ENCODE measurements at regions of chr21 and their contacts with region 1.

Region 1: DNA sequence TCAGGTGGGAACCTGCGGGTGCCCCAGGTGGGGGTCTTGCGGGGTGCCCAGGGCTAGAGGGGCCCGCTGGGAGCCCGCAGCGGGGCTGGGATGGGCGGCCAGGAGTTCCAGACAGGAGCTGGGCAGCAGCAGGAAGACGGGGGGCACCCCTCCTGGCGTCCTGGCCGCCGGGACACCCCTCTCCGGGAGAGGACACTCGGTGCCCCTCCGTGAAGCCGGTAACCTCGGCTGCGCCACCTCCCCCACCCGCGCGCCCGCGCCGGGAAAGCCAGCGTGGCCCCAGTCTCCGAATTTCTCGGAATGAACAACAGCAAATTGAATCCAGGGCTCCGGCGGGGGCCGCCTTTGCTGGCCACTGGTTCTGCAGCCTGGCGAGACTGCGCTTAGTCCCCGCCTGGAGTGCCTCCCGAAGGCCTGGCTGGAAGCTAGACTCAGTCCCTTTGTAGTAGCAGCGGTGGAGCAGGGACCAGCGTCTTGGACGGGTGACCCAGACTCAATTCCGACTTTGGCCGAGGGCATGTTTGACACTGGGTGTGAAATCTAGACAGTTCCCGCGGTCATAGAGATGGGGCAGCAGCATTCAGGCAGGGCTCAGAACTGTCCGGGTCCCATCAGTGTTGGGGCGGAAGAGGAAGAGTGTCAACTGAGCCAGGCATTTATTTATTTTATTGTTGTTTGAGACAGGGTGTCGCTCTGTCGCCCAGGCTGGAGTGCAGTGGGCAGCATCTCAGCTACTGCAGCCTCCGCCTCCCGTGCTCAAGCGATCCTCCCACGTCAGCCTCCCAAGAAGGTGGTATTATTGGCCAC is 769 bp downstream of the IFNGR2 start:
- DNase-seq: peak; percentile 55
- ATAC-seq: peak; percentile 36
- H3K4me3 Mint-ChIP-seq: peak overlapping the region; percentile 86
- H3K27ac Mint-ChIP-seq: peak overlapping the region; percentile 89
- H3K4me1 Mint-ChIP-seq: peaks cover 40% of the 10 kb centered on the region
- H3K27me3 Mint-ChIP-seq: peaks cover 7% of the 10 kb centered on the region

Region 2: DNA sequence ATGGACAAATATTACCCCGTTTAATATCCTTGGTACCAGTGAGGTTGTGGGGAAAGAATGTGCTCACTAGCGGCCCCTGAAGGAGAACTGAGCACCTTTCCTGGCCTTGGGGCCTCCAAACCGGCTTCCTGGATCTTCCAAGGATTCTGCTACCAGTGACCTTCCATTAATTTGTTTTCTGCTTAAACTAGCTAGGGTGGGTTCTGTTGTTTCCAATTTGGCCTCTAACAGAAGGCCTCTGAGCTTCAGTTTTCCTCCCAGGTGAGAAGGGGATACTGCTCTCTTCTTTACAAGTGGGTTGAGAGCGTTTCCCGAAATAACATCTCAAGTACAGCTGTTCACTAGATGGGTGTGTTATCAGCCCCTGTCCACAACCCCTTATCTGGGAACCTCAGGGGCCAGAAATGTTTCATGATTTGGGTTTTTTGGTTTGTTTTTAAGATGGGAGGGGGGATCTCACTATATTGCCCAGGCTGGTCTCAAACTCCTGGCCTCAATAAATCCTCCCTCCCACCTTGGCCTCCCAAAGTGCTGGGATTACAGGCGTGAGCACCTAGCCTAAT is 17.7 kb before region 1 on chr21:
- CTCF ChIA-PET with region 1: interaction called, 12 read pairs
- POLR2A ChIA-PET with region 1: no interaction called
- intact Hi-C with region 1: loop called (anchors 1 kb)
- DNase-seq: no peak
- ATAC-seq: no peak
- H3K4me3 Mint-ChIP-seq: no peak overlapping the region
- H3K27ac Mint-ChIP-seq: no peak overlapping the region
- H3K4me1 Mint-ChIP-seq: peaks cover 42% of the 10 kb centered on the region
- H3K27me3 Mint-ChIP-seq: peaks cover 7% of the 10 kb centered on the region

Region 3: GRCh38 chr21:33421720-33422393 is 17.9 kb after region 1 on chr21:
- CTCF ChIA-PET with region 1: no interaction called
- POLR2A ChIA-PET with region 1: interaction called, 3 read pairs
- intact Hi-C with region 1: loop called in 1 of 2 experiments (anchors 2 kb)
- DNase-seq: no peak
- ATAC-seq: no peak
- H3K4me3 Mint-ChIP-seq: no peak overlapping the region
- H3K27ac Mint-ChIP-seq: no peak overlapping the region
- H3K4me1 Mint-ChIP-seq: peaks cover 3% of the 10 kb centered on the region
- H3K27me3 Mint-ChIP-seq: no peaks in the 10 kb centered on the region